Caco-2 (cell line): ENCODE measurements at regions of chr11 and their contacts with region 1.

Region 1: GRCh38 chr11:33542921-33543320 is 157.7 kb downstream of the C11orf91 start:
- DNase-seq: peak; percentile 61
- H3K4me3 ChIP-seq: no peak overlapping the region
- H3K4me3 Mint-ChIP-seq: no peak overlapping the region
- H3K27ac Mint-ChIP-seq: no peak overlapping the region
- H3K4me1 ChIP-seq: no peaks in the 10 kb centered on the region
- H3K4me1 Mint-ChIP-seq: peaks cover 4% of the 10 kb centered on the region
- H3K27me3 ChIP-seq: no peaks in the 10 kb centered on the region
- H3K27me3 Mint-ChIP-seq: peaks cover 25% of the 10 kb centered on the region
- CTCF ChIP-seq: peak; percentile 44 to 81

Region 2: GRCh38 chr11:33687733-33688479 is 145.0 kb after region 1 on chr11:
- CTCF ChIA-PET with region 1: no interaction called
- POLR2A ChIA-PET with region 1: no interaction called
- intact Hi-C with region 1: loop called (anchors 1 kb)
- DNase-seq: peak; percentile 56 to 67
- H3K4me3 ChIP-seq: no peak overlapping the region
- H3K4me3 Mint-ChIP-seq: no peak overlapping the region
- H3K27ac Mint-ChIP-seq: no peak overlapping the region
- H3K4me1 ChIP-seq: peaks cover 14% of the 10 kb centered on the region
- H3K4me1 Mint-ChIP-seq: peaks cover 6% of the 10 kb centered on the region
- H3K27me3 ChIP-seq: no peaks in the 10 kb centered on the region
- H3K27me3 Mint-ChIP-seq: no peaks in the 10 kb centered on the region
- CTCF ChIP-seq: peak; percentile 74 to 82